ENCODE measurements at regions of chr2 and their contacts with region 1.

Region 1: DNA sequence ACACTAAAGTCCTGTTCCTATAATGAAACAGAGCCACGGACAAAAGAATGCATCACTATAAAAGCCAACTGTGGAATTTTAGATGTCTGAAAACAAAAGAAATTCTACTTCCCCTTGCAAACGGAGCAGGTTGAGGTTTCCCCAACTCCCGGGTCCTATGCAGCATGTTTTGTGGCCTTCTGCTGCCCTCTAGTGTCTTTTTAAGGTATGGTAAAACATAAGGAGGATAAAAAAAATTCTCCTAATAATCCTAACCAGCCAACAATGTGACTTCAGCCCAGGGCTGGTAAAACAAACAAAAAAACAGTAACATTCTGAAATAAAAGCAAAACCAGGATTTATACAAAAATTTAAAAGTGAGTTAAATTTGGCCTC is 539.5 kb downstream of the NRXN1 start:
- DNase-seq: peak; percentile 35 to 61
- H3K4me3 ChIP-seq: no peak overlapping the region
- H3K4me3 Mint-ChIP-seq: no peak overlapping the region
- H3K27ac Mint-ChIP-seq: no peak overlapping the region
- H3K4me1 ChIP-seq: no peaks in the 10 kb centered on the region
- H3K4me1 Mint-ChIP-seq: no peaks in the 10 kb centered on the region
- H3K27me3 ChIP-seq: no peaks in the 10 kb centered on the region
- H3K27me3 Mint-ChIP-seq: peaks cover 12% of the 10 kb centered on the region
- CTCF ChIP-seq: peak; percentile 59 to 69

Region 2: GRCh38 chr2:49687918-49688317 is 804.5 kb before region 1 on chr2:
- CTCF ChIA-PET with region 1: no interaction called
- POLR2A ChIA-PET with region 1: no interaction called
- intact Hi-C with region 1: loop called (anchors 10 kb)
- DNase-seq: no peak
- H3K4me3 ChIP-seq: no peak overlapping the region
- H3K4me3 Mint-ChIP-seq: no peak overlapping the region
- H3K27ac Mint-ChIP-seq: no peak overlapping the region
- H3K4me1 ChIP-seq: no peaks in the 10 kb centered on the region
- H3K4me1 Mint-ChIP-seq: no peaks in the 10 kb centered on the region
- H3K27me3 ChIP-seq: no peaks in the 10 kb centered on the region
- H3K27me3 Mint-ChIP-seq: peaks cover 3% of the 10 kb centered on the region
- CTCF ChIP-seq: peak in 1 of 2 experiments; percentile 27

Region 3: GRCh38 chr2:50344509-50345106 is 147.9 kb before region 1 on chr2:
- CTCF ChIA-PET with region 1: no interaction called
- POLR2A ChIA-PET with region 1: no interaction called
- intact Hi-C with region 1: loop called (anchors 1 kb)
- DNase-seq: peak in 1 of 2 experiments; percentile 6
- H3K4me3 ChIP-seq: no peak overlapping the region
- H3K4me3 Mint-ChIP-seq: no peak overlapping the region
- H3K27ac Mint-ChIP-seq: no peak overlapping the region
- H3K4me1 ChIP-seq: no peaks in the 10 kb centered on the region
- H3K4me1 Mint-ChIP-seq: no peaks in the 10 kb centered on the region
- H3K27me3 ChIP-seq: no peaks in the 10 kb centered on the region
- H3K27me3 Mint-ChIP-seq: peaks cover 14% of the 10 kb centered on the region
- CTCF ChIP-seq: peak; percentile 15 to 16